A549 (cell line): ENCODE measurements at regions of chr7 and their contacts with region 1.

Region 1: GRCh38 chr7:43729214-43729923 is at the start of gene COA1:
- DNase-seq: peak; percentile 77 to 95
- ATAC-seq: peak; percentile 98 to 99
- H3K4me3 ChIP-seq: peak within 1 kb of the TSS; percentile 57
- H3K27ac ChIP-seq: peak within 1 kb of the TSS; percentile 85 to 98
- H3K4me1 ChIP-seq: peaks cover 7% of the 10 kb centered on the region; the same call in 2 of the 3 replicates
- CTCF ChIP-seq: no peak
- EP300 ChIP-seq: no peak
- POLR2A ChIP-seq: peak; percentile 81
- RAD21 ChIP-seq: no peak; a peak in 2 of 5 replicates
- polyA plus RNA-seq, gene COA1: 57.5 and 84.0 TPM in 2 replicates

Region 2: GRCh38 chr7:43758029-43758821 is 28.9 kb after region 1 on chr7 and contains the start of gene BLVRA:
- CTCF ChIA-PET with region 1: interaction called, 7 read pairs
- POLR2A ChIA-PET with region 1: interaction called, 16 read pairs
- DNase-seq: peak; percentile 38 to 90
- ATAC-seq: peak; percentile 83 to 86
- H3K4me3 ChIP-seq: peak within 1 kb of the TSS; percentile 53
- H3K27ac ChIP-seq: peak within 1 kb of the TSS; percentile 74 to 95
- H3K4me1 ChIP-seq: peaks cover 43% of the 10 kb centered on the region
- CTCF ChIP-seq: no peak
- EP300 ChIP-seq: no peak
- POLR2A ChIP-seq: peak; percentile 71
- RAD21 ChIP-seq: no peak
- polyA plus RNA-seq, gene BLVRA: 71.3 and 85.4 TPM in 2 replicates

Region 3: DNA sequence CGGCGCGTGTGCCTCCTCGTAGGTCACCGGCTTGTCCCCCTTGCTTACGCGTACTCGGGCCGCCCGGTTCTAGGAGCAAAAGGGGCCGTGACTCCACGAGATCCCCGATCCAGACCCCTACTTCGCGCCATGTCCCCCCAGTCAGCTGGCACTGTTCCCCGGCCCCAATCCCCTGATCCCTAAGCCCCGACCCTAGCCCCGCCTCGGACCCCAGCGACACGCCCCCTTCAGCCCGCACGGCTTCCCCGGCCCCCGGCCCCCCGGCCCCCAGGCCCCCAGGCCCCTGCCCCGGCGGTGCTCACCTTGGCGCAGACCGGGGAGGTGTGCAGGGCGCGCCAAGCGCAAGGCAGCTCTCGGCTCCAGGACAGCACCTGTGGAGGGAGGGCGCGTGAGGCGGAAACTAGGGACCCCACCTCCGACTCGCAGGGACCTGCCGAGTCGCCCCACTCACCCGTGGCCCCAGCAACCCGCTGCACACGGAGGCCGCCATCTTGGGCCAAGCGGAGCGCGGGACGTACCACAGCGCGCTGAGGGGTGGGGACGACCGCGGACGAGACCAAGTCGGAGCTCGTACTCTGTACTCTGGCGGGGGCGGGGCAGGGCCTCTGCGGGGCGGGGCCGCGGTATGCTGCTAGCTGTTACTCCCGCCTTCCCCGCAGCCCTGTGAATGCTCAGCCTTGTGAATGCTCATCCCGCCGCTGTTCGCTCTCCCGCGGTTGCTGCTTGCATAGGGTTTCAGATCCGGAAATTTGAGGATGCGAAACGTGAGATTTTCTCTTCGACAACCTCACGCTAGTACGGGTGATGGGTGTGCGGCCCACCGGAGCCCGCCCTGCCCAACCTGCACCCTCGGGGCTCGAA is 139.9 kb after region 1 on chr7 and contains the start of gene MRPS24:
- CTCF ChIA-PET with region 1: no interaction called
- POLR2A ChIA-PET with region 1: no interaction called
- DNase-seq: peak; percentile 93 to 96
- ATAC-seq: peak; percentile 96 to 99
- H3K4me3 ChIP-seq: peak within 1 kb of the TSS; percentile 75
- H3K27ac ChIP-seq: peak within 1 kb of the TSS; percentile 85 to 99
- H3K4me1 ChIP-seq: peaks cover 25% of the 10 kb centered on the region
- CTCF ChIP-seq: no peak
- EP300 ChIP-seq: no peak
- POLR2A ChIP-seq: peak; percentile 96
- RAD21 ChIP-seq: no peak; a peak in 1 of 5 replicates
- polyA plus RNA-seq, gene MRPS24: 170 and 217 TPM in 2 replicates